ENCODE measurements at regions of chr7 and their contacts with region 1.

Region 1: GRCh38 chr7:85030893-85031292 is 156.0 kb downstream of the SEMA3D start:
- DNase-seq: no peak
- ATAC-seq: no peak

Region 2: DNA sequence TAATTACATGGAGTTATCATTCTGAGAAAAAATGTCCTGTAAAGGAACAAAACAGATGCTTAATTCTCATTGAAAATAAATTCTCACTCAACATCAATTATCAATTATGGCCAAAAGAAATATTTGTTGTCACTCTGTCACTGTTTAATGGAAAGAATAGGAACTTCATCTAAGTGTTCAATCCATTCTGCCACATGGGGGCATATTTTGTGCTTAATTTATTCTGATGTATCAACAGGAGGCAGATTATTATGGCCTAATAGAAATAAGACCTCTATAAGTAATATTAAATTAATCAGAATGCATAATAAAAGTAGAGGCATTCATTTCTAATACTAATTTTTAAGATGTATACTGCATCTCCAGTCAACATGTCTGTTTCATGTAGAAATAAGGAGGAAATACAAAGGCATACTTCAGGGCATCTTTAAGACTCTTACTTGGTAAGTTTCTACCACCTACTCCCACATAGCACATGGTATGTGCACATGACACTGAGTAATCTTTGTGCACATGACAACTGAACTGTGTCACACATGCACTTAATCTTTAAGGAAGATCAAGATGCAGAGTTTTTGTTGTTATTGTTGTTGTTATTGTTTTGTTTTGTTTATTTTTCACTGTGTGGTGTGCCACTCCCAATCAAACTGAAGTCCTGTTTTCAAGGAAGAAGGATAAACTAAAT is 415.9 kb before region 1 on chr7:
- intact Hi-C with region 1: no loop called
- DNase-seq: no peak
- ATAC-seq: no peak

Region 3: GRCh38 chr7:85851571-85852193 is 820.8 kb after region 1 on chr7:
- intact Hi-C with region 1: loop called (anchors 10 kb)
- DNase-seq: no peak
- ATAC-seq: no peak

Measured in left ventricle myocardium superior (tissue), 1 donor.